ENCODE measurements at regions of chr15 and their contacts with region 1.

Region 1: GRCh38 chr15:67762610-67763368 is 62.5 kb upstream of the SKOR1 start:
- DNase-seq: peak; percentile 81
- ATAC-seq: peak; percentile 99
- H3K4me3 Mint-ChIP-seq: no peak overlapping the region
- H3K27ac Mint-ChIP-seq: peak overlapping the region; percentile 79
- H3K4me1 Mint-ChIP-seq: peaks cover 76% of the 10 kb centered on the region
- H3K27me3 Mint-ChIP-seq: no peaks in the 10 kb centered on the region

Region 2: DNA sequence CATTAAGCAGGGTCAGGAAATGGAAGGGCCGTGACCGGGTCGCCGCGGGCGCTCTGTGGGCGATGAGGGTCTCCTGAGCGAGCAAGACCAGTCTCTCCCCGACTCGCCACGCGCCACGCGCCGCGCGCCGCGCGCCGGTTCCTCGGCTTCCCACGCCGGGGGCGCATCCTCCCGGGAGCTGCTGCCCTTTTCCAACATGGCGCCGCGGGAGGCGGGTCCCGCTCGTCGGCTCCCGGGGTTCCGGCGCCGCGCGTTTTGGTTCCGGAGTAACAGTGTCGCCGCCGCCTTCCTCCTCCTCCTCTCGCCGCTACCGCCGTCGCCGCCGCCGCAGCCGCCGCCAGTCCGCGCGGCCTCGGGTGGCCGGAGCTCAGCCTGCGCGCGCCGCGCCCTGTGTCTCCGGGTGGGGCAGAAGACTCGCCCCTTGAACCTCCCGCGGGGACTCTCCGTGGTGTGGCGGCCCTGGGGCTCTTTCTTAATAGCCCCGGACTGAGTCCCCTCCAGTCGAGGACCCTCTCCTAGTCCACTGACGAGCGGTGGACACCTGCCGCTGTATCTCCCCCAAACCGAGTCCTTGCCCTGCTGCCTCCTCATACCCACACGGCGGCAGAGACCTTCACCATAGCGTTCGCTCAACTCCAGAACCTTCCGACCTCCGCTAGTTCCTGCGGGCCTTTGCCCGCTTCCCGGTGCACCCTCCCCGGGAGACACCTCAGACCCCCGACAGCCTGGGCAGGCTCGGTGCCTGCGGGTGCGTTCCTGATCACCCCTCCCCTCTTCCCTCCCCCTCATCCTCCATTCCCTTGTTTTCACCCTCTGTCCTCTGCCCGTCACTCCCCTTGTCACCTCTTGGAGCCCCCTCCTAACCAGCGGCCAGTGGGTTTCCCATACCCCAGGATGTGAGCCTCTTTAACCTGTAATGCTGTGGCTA is 220.1 kb before region 1 on chr15 and contains the start of gene MAP2K5:
- CTCF ChIA-PET with region 1: no interaction called
- POLR2A ChIA-PET with region 1: no interaction called
- intact Hi-C with region 1: loop called (anchors 2 to 5 kb)
- DNase-seq: peak; percentile 90
- ATAC-seq: peak; percentile 70
- H3K4me3 Mint-ChIP-seq: peak within 1 kb of the TSS; percentile 82
- H3K27ac Mint-ChIP-seq: peak within 1 kb of the TSS; percentile 95
- H3K4me1 Mint-ChIP-seq: peaks cover 43% of the 10 kb centered on the region
- H3K27me3 Mint-ChIP-seq: no peaks in the 10 kb centered on the region
- total RNA-seq, gene MAP2K5: 18.0 to 26.7 TPM

Region 3: GRCh38 chr15:67746022-67746421 is 16.8 kb before region 1 on chr15:
- CTCF ChIA-PET with region 1: interaction called, 3 read pairs
- POLR2A ChIA-PET with region 1: no interaction called
- intact Hi-C with region 1: loop called (anchors 1 to 2 kb)
- DNase-seq: no peak
- ATAC-seq: peak; percentile 63
- H3K4me3 Mint-ChIP-seq: no peak overlapping the region
- H3K27ac Mint-ChIP-seq: peak overlapping the region; percentile 78
- H3K4me1 Mint-ChIP-seq: peaks cover 55% of the 10 kb centered on the region
- H3K27me3 Mint-ChIP-seq: no peaks in the 10 kb centered on the region

Region 4: DNA sequence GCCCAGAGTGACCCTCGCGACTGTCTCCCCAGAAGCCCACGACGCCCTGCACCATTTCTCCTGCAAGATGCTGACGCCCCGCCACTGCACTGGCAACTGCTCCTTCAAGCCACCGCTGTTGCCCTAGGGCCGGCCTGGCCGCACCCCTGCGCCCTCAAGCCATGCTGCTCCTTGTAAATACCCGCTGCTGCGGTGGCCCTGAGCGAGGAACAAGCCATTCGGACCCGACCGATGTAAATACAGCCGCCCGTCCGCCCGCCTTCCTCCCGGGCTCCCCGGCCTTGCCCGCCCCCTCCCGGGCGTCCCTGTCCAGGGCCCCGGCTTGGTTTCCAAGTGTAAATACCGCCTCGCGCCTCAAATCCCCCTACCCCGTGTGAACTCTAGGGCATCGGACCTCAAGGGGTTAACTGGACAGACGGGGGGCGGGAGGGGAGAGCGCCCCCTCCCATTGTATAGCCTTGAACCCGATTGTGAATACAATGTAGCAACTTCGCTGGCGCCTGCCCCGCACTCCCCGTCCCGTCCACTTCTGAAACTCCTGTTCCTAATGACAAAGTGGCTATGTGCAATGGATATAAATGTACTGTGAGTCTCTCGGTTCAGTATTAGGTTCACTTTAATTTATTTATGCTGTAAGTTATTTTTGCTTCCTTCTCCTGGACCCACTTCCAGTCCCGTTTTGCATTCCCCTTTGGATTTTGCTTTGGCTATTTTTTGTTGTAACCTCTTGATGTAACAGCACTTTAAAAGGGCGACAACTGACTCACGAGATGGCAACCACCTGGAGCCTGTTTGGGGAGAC is 71.1 kb after region 1 on chr15:
- CTCF ChIA-PET with region 1: interaction called, 3 read pairs
- POLR2A ChIA-PET with region 1: no interaction called
- intact Hi-C with region 1: loop called in 1 of 2 experiments (anchors 5 kb)
- DNase-seq: peak; percentile 70
- ATAC-seq: peak; percentile 57
- H3K4me3 Mint-ChIP-seq: peak overlapping the region; percentile 55
- H3K27ac Mint-ChIP-seq: no peak overlapping the region
- H3K4me1 Mint-ChIP-seq: peaks cover 36% of the 10 kb centered on the region
- H3K27me3 Mint-ChIP-seq: peaks cover 56% of the 10 kb centered on the region

Measured in activated CD4-positive, alpha-beta T cell treated with anti-CD3 and anti-CD28 coated beads for 36 hours (primary cell).